ENCODE measurements at regions of chr3 and their contacts with region 1.

Region 1: DNA sequence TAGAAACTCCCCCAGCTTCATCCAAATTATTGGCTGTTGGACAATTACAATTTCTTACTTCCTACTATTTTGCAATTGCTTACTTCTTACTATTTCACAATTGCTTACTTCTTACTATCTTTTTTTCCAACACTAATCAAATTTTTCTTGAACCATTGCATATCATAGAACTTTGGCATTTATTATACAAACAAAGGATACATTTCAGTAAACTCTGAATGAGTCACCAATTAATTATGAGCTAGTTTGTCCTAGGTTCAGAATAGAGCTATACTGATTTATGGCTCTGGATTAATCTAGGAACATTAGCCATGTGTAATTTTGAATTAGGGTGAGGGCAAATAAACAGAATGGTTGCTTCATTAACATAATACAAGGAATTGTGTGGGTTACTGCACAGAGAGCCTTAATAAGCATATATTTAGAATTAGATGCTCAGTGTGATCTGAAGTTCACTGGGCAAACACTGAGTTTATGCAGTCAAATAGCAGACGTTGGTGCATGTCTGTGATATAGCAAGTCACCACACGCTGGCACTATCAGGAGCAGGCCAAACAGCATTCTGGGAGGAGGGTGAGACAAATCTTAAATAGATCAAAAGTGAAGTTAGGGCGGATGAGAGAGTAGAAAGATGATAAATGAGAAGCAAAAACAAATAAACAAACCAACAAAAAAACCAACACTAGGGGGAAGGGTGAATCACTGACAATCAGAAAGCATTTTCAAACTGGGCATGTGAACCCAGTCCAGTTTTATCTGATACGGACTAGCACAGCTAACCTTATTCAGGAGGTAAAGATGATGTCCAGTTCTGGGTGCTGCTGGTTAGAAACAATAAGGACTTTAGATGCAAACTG is 21.5 kb downstream of the GABRR3 start:
- DNase-seq: no peak
- ATAC-seq: peak in 2 of 4 donors; percentile 43 to 51
- H3K4me3 ChIP-seq: no peak overlapping the region
- H3K27ac ChIP-seq: no peak overlapping the region
- H3K4me1 ChIP-seq: peaks cover 6% of the 10 kb centered on the region
- H3K27me3 ChIP-seq: no peaks in the 10 kb centered on the region
- CTCF ChIP-seq: no peak

Region 2: GRCh38 chr3:97815149-97815917 is 198.3 kb before region 1 on chr3:
- intact Hi-C with region 1: no loop called
- DNase-seq: no peak
- ATAC-seq: no peak
- H3K4me3 ChIP-seq: no peak overlapping the region
- H3K27ac ChIP-seq: no peak overlapping the region
- H3K4me1 ChIP-seq: no peaks in the 10 kb centered on the region
- H3K27me3 ChIP-seq: no peaks in the 10 kb centered on the region
- CTCF ChIP-seq: no peak

Region 3: DNA sequence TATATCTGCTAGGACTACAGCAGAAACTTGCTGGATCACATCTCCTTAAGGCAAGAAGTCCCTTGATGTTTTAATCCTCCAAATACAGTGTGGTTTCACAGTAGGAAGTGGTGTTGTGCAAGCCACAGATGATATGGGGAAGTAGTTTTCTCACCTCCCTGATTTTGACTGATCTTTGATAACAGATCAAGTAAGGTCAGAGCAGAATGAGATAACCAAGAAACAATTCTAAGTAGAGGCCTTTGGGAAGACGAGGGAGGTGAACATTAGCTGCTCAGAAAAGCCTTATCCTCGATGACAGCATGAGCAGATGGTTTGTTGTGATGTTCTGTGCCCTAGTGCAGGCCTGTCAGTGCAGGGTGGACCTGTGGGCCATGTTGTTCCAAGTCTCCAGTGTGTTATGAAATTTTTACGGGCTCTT is 102.7 kb before region 1 on chr3:
- intact Hi-C with region 1: loop called in 1 of 2 experiments (anchors 10 kb)
- DNase-seq: no peak
- ATAC-seq: no peak
- H3K4me3 ChIP-seq: no peak overlapping the region
- H3K27ac ChIP-seq: no peak overlapping the region
- H3K4me1 ChIP-seq: peaks cover 7% of the 10 kb centered on the region
- H3K27me3 ChIP-seq: no peaks in the 10 kb centered on the region
- CTCF ChIP-seq: no peak

Region 4: GRCh38 chr3:97990624-97991292 is 22.9 kb before region 1 on chr3:
- intact Hi-C with region 1: loop called in 1 of 2 experiments (anchors 1 kb)
- DNase-seq: no peak
- ATAC-seq: no peak
- H3K4me3 ChIP-seq: no peak overlapping the region
- H3K27ac ChIP-seq: no peak overlapping the region
- H3K4me1 ChIP-seq: no peaks in the 10 kb centered on the region
- H3K27me3 ChIP-seq: no peaks in the 10 kb centered on the region
- CTCF ChIP-seq: no peak

Region 5: DNA sequence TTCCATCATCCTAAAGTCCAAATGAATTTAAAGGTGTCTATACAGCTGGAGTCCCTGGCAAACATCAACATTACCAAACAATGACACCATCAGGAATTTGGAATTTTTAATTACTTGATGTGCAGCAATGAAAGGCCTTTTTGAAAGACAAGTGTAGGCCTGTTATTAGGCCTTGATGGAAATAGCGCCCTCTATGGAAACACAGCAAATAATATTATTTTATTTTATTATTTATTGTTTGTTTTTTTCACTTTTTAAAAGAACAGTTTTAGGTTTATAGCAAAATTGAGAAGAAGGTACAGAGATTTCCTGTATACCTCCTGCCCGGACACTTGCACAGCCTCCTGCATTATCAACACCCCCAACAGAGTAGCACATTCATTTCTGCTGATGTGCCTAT is 55.2 kb after region 1 on chr3:
- intact Hi-C with region 1: no loop called
- DNase-seq: no peak
- ATAC-seq: no peak
- H3K4me3 ChIP-seq: no peak overlapping the region
- H3K27ac ChIP-seq: no peak overlapping the region
- H3K4me1 ChIP-seq: no peaks in the 10 kb centered on the region
- H3K27me3 ChIP-seq: no peaks in the 10 kb centered on the region
- CTCF ChIP-seq: no peak

Measured in psoas muscle (tissue), 8 donors.